SK-N-SH (cell line): ENCODE measurements at regions of chr1 and their contacts with region 1.

Region 1: DNA sequence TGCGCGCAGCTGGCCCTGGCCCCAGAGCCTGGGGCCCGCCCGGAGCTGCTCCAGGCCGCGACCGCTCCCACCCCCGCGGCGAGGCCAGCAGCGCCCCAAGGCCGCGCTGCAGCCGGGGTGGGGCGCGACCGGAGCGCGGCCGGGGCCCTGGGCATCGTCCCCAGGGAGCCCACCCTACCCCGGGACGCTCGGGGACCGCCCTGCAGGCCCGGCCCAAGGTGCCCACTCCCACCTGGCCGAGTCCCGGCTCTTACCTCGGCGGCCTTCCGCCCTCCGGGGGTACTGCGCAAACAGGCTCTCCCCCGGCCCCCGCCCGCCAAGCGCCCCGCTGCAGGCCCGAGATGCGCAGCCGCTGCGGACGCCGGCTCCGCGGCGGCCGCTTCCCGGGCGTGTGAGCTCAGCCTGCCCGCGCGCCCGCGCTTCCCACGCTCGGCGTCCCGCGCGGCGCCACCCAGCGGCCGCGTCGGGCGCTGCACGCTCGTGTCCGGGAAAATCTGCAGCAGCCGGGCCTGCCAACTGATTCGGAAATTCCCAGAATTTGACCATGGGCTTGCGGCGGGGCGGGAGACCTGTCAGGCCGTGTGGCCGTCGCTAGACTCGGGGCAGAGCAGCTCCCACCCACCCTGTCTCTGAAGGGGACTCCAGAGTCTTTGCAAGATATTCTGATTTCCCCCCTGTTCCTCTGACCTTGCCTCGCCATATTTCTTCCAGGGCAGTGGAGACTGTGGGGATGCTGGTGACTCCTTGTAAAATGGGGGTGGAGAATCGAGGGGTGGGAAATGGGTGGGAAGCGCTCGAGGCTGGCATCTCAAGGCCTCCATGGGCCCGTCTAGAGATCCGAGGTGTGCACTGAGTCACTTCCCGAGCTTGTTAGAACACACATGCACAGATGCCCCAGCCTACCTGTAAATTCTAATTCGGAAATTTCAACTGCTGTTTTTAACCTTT is 41.9 kb downstream of the CD34 start:
- DNase-seq: peak; percentile 93
- H3K4me3 ChIP-seq: peak overlapping the region; percentile 78 to 85
- H3K27ac ChIP-seq: peak overlapping the region in 1 of 2 experiments; percentile 47; a peak in 1 of 4 replicates
- H3K4me1 ChIP-seq: peaks cover 0 to 32% of the 10 kb centered on the region in 2 experiments; a peak in 1 of 4 replicates
- H3K27me3 ChIP-seq: no peaks in the 10 kb centered on the region
- CTCF ChIP-seq: peak; percentile 62
- EP300 ChIP-seq: no peak
- RAD21 ChIP-seq: peak; percentile 54; the same call in 1 of the 2 replicates

Region 2: DNA sequence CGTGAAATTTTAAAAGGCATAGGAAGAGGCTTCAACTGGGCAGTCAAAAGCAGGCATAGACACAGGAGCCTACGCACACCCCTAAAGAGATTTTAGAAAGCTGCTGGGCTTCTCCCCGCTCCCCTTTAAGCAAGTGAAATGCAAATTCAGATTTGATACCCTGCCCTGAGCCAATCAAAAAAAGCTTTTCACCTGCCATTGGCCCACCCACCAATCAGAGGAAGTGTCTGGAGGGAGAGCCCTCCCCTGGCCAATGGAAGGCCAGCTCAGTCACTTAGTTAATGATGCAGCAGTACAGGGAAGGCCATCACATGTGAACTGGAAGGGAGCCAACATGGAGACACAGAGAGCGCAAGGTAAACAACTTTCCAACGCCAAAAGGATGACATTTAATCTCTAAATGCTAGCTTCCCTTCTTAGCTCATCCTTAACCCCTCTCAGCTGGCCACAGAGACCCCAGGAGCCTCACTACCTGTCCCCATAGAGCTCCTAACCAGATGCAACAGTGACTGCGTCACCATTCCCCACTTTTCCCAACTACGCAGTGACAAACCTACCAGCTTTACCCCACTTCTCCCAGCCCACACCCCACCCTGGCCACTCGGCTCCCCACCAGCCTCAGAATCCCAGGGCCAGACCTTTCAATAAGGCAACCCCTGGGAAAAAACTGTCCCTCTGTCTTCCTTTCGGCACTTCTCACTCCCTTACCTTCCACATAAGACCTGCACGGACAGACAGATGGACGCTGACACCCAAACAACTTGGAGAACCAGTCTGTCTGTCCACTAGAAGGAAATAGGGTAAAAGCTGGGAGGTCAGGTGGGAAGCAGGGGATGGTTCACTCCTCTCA is 46.2 kb before region 1 on chr1:
- CTCF ChIA-PET with region 1: interaction called, 26 read pairs
- POLR2A ChIA-PET with region 1: no interaction called
- DNase-seq: peak; percentile 66
- H3K4me3 ChIP-seq: no peak overlapping the region
- H3K27ac ChIP-seq: no peak overlapping the region
- H3K4me1 ChIP-seq: peaks cover 0 to 5% of the 10 kb centered on the region in 2 experiments; a peak in 1 of 4 replicates
- H3K27me3 ChIP-seq: no peaks in the 10 kb centered on the region
- CTCF ChIP-seq: no peak
- EP300 ChIP-seq: no peak
- RAD21 ChIP-seq: no peak

Region 3: DNA sequence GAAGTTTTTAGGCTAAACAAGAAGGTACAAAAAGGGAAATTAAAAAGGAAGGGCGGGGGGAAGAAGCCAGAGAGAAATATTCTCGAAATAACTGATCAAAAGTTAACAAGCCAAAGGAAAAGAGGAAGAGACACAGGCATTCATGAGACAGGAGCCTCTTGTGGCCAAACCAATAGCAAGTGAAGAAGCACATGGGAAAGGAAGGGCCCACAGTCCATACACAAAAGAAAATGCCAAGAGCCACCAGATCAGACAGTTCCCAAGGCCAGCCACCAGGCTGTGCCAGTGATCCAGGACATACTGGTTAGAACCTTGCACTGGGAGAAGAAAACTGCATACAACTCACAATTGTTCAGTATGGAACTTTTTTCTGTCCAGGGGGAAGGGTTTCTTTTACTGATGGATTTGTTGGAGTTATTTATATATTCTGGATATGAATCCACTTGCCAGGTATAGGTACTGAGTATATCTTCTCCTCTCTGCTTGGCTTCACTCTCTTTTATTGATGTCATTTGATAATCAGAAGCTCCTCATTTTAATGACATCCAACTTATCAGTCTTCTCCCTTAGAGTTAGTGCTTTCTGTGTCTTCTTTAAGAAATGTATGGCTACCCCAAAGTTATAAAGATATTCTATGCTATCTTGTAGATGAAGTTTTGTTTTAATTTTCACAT is 40.4 kb before region 1 on chr1:
- CTCF ChIA-PET with region 1: interaction called, 82 read pairs
- POLR2A ChIA-PET with region 1: no interaction called
- DNase-seq: peak; percentile 64
- H3K4me3 ChIP-seq: no peak overlapping the region
- H3K27ac ChIP-seq: no peak overlapping the region
- H3K4me1 ChIP-seq: peaks cover 0 to 18% of the 10 kb centered on the region in 2 experiments; a peak in 2 of 4 replicates
- H3K27me3 ChIP-seq: no peaks in the 10 kb centered on the region
- CTCF ChIP-seq: peak; percentile 69
- EP300 ChIP-seq: no peak
- RAD21 ChIP-seq: peak; percentile 80

Region 4: GRCh38 chr1:207840380-207840779 is 28.7 kb before region 1 on chr1:
- CTCF ChIA-PET with region 1: interaction called, 16 read pairs
- POLR2A ChIA-PET with region 1: no interaction called
- DNase-seq: no peak
- H3K4me3 ChIP-seq: no peak overlapping the region
- H3K27ac ChIP-seq: no peak overlapping the region
- H3K4me1 ChIP-seq: peaks cover 0 to 3% of the 10 kb centered on the region in 2 experiments; a peak in 1 of 4 replicates
- H3K27me3 ChIP-seq: no peaks in the 10 kb centered on the region
- CTCF ChIP-seq: no peak
- EP300 ChIP-seq: no peak
- RAD21 ChIP-seq: no peak

Region 5: GRCh38 chr1:207853372-207853757 is 15.7 kb before region 1 on chr1:
- CTCF ChIA-PET with region 1: interaction called, 12 read pairs
- POLR2A ChIA-PET with region 1: interaction called, 3 read pairs
- DNase-seq: no peak
- H3K4me3 ChIP-seq: no peak overlapping the region
- H3K27ac ChIP-seq: no peak overlapping the region
- H3K4me1 ChIP-seq: no peaks in the 10 kb centered on the region; a peak in 1 of 4 replicates
- H3K27me3 ChIP-seq: no peaks in the 10 kb centered on the region
- CTCF ChIP-seq: no peak
- EP300 ChIP-seq: no peak
- RAD21 ChIP-seq: no peak

Region 6: DNA sequence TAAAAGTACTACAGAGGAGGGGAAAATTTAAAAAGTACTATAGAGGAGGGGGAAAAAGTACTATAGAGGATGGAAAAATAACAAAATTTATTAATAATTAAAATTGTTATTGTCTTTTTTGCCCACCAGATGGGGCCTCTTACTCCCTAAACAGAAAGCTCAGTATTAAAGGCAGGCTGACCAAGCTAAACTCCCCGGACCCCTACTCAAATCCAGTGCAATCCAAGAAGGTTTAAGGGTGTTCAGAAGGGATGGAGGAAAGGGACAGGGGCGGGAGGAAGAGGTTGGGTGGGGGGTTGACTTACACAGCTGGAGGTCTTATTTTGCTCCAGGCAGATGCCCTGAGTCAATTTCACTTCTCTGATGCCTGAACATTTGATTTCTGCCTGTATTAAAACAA is 28.1 kb after region 1 on chr1:
- CTCF ChIA-PET with region 1: interaction called, 23 read pairs
- POLR2A ChIA-PET with region 1: no interaction called
- DNase-seq: peak; percentile 48
- H3K4me3 ChIP-seq: no peak overlapping the region
- H3K27ac ChIP-seq: no peak overlapping the region
- H3K4me1 ChIP-seq: no peaks in the 10 kb centered on the region
- H3K27me3 ChIP-seq: no peaks in the 10 kb centered on the region
- CTCF ChIP-seq: peak; percentile 49
- EP300 ChIP-seq: no peak
- RAD21 ChIP-seq: peak; percentile 61